PC-3 (cell line): ENCODE measurements at regions of chr5 and their contacts with region 1.

Region 1: GRCh38 chr5:57825031-57825683 is 342.5 kb upstream of the ACTBL2 start:
- DNase-seq: peak; percentile 93
- ATAC-seq: peak; percentile 85
- H3K4me3 ChIP-seq: no peak overlapping the region
- H3K27ac ChIP-seq: peak overlapping the region; percentile 93
- H3K4me1 ChIP-seq: peaks cover 36% of the 10 kb centered on the region
- H3K27me3 ChIP-seq: no peaks in the 10 kb centered on the region
- CTCF ChIP-seq: no peak

Region 2: DNA sequence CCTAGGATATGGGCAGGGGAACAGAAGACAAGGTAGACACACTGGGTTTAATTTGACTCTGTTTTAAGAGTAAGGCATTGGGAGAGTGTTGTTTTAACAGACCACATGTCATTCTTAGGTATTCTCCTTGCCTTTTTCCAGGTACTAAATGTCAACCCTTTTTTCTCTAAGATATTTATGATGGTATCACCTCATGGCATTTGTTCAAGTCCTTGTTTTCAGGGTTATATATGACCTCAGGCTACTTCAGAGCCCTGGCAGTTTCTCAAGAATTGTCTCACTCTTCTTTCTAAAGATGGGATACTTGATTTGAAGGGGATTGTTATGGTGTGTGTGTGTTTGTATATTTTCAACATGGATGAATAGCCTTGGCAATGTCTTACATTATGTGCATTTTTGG is 211.4 kb before region 1 on chr5:
- CTCF ChIA-PET with region 1: no interaction called
- POLR2A ChIA-PET with region 1: no interaction called
- intact Hi-C with region 1: no loop called
- DNase-seq: no peak
- ATAC-seq: no peak
- H3K4me3 ChIP-seq: no peak overlapping the region
- H3K27ac ChIP-seq: no peak overlapping the region
- H3K4me1 ChIP-seq: no peaks in the 10 kb centered on the region
- H3K27me3 ChIP-seq: no peaks in the 10 kb centered on the region
- CTCF ChIP-seq: no peak

Region 3: GRCh38 chr5:57736716-57737115 is 88.4 kb before region 1 on chr5:
- CTCF ChIA-PET with region 1: no interaction called
- POLR2A ChIA-PET with region 1: no interaction called
- intact Hi-C with region 1: no loop called
- DNase-seq: no peak
- ATAC-seq: no peak
- H3K4me3 ChIP-seq: no peak overlapping the region
- H3K27ac ChIP-seq: peak overlapping the region; percentile 92
- H3K4me1 ChIP-seq: peaks cover 63% of the 10 kb centered on the region
- H3K27me3 ChIP-seq: no peaks in the 10 kb centered on the region
- CTCF ChIP-seq: no peak

Region 4: GRCh38 chr5:57841676-57842363 is 16.7 kb after region 1 on chr5:
- CTCF ChIA-PET with region 1: no interaction called
- POLR2A ChIA-PET with region 1: interaction called, 7 read pairs
- intact Hi-C with region 1: loop called (anchors 1 kb)
- DNase-seq: peak; percentile 87
- ATAC-seq: peak; percentile 64
- H3K4me3 ChIP-seq: peak overlapping the region; percentile 12; the same call in 1 of the 2 replicates
- H3K27ac ChIP-seq: peak overlapping the region; percentile 81
- H3K4me1 ChIP-seq: peaks cover 57% of the 10 kb centered on the region
- H3K27me3 ChIP-seq: no peaks in the 10 kb centered on the region
- CTCF ChIP-seq: no peak